HCT116 (cell line): ENCODE measurements at regions of chr1 and their contacts with region 1.

Region 1: GRCh38 chr1:203038891-203039608 is 12.8 kb downstream of the PPFIA4 start:
- DNase-seq: no peak
- ATAC-seq: peak; percentile 92
- H3K4me3 ChIP-seq: no peak overlapping the region
- H3K27ac ChIP-seq: no peak overlapping the region
- H3K4me1 ChIP-seq: peaks cover 0 to 22% of the 10 kb centered on the region in 2 experiments; a peak in 2 of 4 replicates
- H3K27me3 ChIP-seq: no peaks in the 10 kb centered on the region
- CTCF ChIP-seq: peak; percentile 83 to 97 (median 92)
- POLR2A ChIP-seq: no peak
- RAD21 ChIP-seq: peak; percentile 89

Region 2: GRCh38 chr1:203117611-203118575 is 78.8 kb after region 1 on chr1:
- CTCF ChIA-PET with region 1: interaction called, 20 read pairs
- POLR2A ChIA-PET with region 1: no interaction called
- RAD21 ChIA-PET with region 1: interaction called, 5 to 9 read pairs
- intact Hi-C with region 1: no loop called
- DNase-seq: peak; percentile 52
- ATAC-seq: peak; percentile 100
- H3K4me3 ChIP-seq: no peak overlapping the region
- H3K27ac ChIP-seq: no peak overlapping the region
- H3K4me1 ChIP-seq: peaks cover 0 to 10% of the 10 kb centered on the region in 2 experiments; a peak in 1 of 4 replicates
- H3K27me3 ChIP-seq: peaks cover 21% of the 10 kb centered on the region; the same call in 1 of the 2 replicates
- CTCF ChIP-seq: peak; percentile 79 to 87 (median 80)
- POLR2A ChIP-seq: no peak
- RAD21 ChIP-seq: peak; percentile 95

Region 3: DNA sequence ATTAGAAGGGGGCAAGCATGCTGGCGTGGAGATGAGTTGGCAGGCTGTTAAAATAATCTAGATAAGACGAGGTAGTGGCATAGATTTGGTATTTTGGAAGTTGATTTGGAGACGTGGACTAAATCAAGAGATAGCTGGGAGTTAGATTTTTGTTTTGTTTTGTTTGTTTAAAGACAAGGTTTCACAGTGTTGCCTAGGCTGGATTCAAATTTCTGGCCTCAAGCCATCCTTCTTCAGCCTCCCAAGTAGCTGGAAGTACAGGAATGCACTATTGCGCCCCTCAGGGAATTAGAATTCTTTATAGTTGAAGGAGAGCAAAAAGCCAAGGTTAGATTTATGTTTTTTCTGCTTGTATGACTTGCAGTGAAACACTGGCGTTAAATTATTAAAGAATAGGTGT is 800.0 kb after region 1 on chr1:
- CTCF ChIA-PET with region 1: no interaction called
- POLR2A ChIA-PET with region 1: no interaction called
- RAD21 ChIA-PET with region 1: no interaction called
- intact Hi-C with region 1: no loop called
- DNase-seq: no peak
- ATAC-seq: no peak
- H3K4me3 ChIP-seq: no peak overlapping the region
- H3K27ac ChIP-seq: no peak overlapping the region
- H3K4me1 ChIP-seq: no peaks in the 10 kb centered on the region
- H3K27me3 ChIP-seq: no peaks in the 10 kb centered on the region
- CTCF ChIP-seq: no peak
- POLR2A ChIP-seq: no peak
- RAD21 ChIP-seq: no peak